Right lobe of liver (tissue), 6 donors: ENCODE measurements at regions of chr13 and their contacts with region 1.

Region 1: DNA sequence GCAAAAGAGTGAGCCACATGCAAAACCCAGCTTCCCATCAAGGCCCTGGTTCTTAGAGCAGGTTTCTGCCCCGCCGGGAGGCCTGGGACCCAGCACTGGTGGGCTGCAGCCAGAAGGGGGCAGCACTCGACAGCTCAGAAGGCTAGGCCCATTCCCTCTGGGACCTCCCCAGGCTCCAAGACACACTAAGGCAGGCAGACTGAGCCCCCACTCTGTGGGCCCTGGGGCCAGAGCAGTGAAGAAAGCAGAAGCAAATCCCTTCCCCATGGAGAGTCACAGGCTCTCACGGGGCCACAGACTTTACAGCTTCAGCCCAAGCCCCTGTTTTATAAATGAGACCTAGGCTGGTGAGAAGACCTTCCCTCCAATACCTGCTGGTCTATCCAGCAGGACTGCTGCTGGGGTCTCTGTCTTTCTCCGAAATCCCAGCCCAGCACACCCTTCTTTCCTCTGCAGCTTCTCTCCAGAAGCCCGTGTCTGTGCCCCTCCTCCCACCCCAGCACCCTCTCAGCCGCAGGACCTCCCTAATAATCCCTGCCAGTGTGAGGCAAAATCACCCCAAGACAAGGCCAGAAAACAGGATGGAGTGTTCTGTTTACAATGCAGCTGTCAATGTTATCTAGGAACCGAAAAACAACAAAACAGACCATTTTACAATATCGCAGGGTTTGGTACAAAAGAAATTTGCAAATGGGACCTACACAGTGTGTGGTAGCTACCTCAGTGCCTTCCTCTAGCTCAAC is 109.3 kb downstream of the ABCC4 start:
- DNase-seq: peak; percentile 63 to 73 (median 72)
- ATAC-seq: peak; percentile 57 to 74 (median 68)
- H3K4me3 ChIP-seq: no peak overlapping the region
- H3K27ac ChIP-seq: peak overlapping the region in 1 of 3 donors; percentile 71
- H3K4me1 ChIP-seq: peaks cover 0 to 13% (median 2%) of the 10 kb centered on the region in 4 donors
- H3K27me3 ChIP-seq: no peaks in the 10 kb centered on the region
- CTCF ChIP-seq: peak; percentile 65 to 80 (median 70)
- POLR2A ChIP-seq: no peak

Region 2: DNA sequence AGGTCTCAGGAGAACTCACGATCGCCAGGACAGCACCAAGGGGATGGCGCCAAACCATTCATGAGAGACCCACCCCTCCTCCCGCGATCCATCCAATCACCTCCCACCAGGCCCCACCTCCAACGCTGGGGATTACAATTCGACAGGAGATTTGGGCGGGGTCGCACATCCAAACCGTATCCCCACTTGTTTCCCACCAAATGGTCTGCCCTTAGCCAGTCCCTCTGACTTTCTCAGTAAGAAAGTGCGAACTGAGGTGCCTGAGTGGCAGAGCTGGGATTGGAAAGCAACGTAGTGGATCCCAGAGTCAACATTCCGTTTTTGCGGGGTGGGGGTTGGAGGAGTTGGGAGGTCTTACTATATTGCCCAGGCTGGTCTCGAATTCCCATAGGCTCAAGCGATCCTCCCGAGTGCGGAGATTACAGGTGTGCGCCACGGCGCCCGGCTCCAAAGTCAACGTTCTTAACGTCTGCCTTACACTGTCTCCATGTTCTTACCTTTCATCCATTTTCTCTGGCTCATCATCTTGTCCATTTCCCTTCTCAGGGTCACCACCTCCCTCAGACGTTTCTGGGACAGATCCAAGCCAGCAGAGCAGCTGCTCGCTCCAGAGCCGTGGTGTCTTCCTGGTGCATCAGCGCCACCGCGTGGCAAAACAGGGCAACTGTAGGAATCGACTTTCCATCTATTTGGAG is 212.0 kb after region 1 on chr13:
- intact Hi-C with region 1: loop called (anchors 5 kb)
- DNase-seq: peak; percentile 82 to 86 (median 85)
- ATAC-seq: peak; percentile 96 to 99 (median 98)
- H3K4me3 ChIP-seq: peak overlapping the region in 1 of 3 donors; percentile 26
- H3K27ac ChIP-seq: no peak overlapping the region
- H3K4me1 ChIP-seq: peaks cover 0 to 5% (median 0%) of the 10 kb centered on the region in 4 donors
- H3K27me3 ChIP-seq: no peaks in the 10 kb centered on the region
- CTCF ChIP-seq: peak; percentile 92 to 95 (median 94)
- POLR2A ChIP-seq: no peak